ENCODE measurements at regions of chrX and their contacts with region 1.

Region 1: GRCh38 chrX:12974796-12975669 is at the start of gene TMSB4X:
- DNase-seq: peak; percentile 92
- ATAC-seq: peak; percentile 81
- total RNA-seq, gene TMSB4X: 1,134 TPM

Region 2: DNA sequence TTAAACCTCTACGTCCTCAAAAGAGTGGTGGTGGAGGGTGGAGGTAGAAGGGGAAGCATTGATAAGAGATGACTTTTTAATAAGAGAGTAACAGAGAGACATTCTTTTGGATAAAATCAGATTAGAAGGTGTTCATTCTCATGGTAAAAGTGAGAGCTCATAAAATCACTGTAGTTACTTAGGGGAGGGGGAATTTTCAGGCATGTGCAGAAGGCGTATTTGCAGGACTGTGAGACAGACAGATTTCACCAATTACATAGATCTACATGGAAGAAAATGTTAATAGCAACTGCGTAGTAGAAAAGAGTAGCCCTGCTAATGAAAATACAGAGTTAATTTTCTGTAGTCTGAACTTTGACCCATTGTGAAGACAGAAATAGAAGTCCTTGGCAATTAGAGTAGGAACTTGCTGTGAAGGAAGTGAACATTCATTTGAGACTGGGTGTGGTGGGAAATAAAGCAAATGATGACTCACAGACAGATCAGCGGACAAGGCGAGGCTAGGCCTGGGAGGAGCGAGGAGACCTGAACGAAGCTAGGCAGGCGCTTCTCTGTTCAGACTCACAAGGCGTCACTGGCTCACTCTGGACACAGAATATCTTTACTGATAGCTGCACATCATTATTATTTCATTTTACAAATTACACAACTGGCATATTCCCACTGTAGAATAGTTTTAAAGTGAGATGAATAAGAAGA is 126.6 kb after region 1 on chrX:
- intact Hi-C with region 1: loop called (anchors 5 kb)
- DNase-seq: peak; percentile 82
- ATAC-seq: peak; percentile 96

Region 3: DNA sequence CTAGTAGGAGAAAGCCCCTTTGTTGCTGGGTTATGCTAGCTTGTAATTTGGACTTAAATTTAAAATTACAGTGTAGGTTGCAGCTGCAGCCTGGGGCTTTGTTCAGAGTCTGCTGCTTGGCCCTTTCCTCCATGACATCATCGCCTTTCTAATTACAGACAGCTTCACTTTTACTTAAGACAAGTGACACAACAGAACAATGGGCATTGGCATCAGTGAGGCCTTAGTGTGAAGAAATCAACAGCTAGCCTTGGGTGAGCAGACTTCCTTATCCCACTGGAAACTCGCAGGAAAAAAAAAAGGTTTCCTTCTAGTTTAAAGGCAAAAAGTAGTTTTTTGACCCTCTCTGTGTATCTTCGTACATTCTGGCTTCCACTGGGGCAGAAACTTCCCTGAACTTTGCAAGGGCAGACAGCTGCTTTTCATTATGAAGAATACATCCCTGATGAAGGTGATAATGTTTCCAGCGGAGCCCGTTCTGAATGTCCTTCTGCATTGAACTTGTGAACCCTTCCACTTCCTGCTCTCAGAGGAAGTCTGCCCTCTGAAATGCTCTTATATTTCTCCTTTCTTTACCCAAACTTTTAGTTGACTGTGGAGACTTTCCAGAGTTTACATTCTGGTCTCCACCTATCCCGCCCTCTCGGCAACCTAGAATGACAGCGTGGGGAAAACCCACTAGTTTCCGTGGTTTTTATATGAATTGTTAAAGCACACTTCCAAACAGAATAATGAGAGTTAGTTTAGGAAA is 192.6 kb after region 1 on chrX:
- intact Hi-C with region 1: loop called (anchors 5 kb)
- DNase-seq: peak; percentile 54
- ATAC-seq: peak; percentile 72

Region 4: DNA sequence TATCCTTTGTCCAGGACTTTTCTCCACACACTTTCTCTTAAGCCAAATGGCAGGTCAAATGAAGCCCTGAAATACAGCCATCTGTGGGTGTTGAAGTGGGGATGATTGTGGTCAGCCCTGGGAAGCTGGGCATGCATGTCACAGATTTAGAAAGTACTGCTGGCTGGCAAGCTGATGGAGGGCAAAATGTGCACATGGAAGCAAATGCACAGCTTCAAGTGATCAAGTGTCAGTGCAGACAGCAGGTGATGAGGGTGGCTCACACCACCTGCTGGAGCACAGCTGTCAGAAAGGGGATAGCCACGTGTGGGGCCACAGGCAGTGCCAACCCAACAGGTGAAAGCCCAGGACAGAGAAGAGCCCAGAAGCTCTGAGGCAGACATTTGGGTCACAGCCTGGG is 385.1 kb after region 1 on chrX:
- intact Hi-C with region 1: loop called (anchors 10 kb)
- DNase-seq: no peak
- ATAC-seq: peak; percentile 92

Region 5: GRCh38 chrX:13487731-13488523 is 512.9 kb after region 1 on chrX:
- intact Hi-C with region 1: loop called (anchors 2 kb)
- DNase-seq: no peak
- ATAC-seq: peak; percentile 86

Region 6: GRCh38 chrX:13653022-13653693 is 678.1 kb after region 1 on chrX and contains the start of gene TCEANC:
- intact Hi-C with region 1: loop called (anchors 10 kb)
- DNase-seq: peak; percentile 97
- ATAC-seq: peak; percentile 100
- total RNA-seq, gene TCEANC: 6.4 TPM

Measured in Right ventricle myocardium inferior (tissue), 1 donor.